ENCODE measurements at regions of chrX and their contacts with region 1.

Region 1: DNA sequence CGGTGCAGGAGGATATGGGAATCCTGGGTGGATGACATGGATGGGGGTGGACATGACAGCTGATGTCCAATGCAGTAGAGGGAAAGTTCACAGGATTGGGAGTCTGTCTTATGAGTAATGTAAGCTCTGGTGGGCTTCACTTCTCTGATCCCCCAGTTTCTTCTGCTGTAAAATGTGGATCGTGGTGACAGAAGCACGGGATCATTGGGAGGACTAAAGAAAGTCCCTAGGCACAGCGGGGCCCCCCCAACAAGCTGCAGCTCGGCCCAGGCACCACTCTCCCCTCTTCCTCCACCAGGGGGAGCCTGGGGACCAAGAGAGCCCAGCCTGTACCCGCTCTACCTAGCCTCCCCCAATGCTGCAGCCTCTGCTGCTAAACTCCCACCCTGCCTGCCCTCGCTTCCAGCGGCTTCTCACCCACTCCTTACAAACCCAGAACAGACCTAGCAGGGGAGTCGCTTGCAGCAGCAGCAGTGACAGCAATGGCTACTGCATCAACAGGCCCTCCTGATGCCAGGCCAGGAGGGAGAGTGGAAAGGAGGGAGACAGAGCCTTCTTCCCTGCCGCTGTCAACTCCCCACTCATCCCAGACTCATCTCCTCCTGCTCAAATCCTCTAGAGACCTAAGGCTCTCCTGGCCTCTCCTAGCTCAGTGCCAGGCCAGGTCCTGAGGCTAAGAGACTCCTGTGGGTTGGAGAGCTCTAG is 36.1 kb upstream of the IQSEC2 start:
- DNase-seq: peak; percentile 76
- ATAC-seq: peak; percentile 87
- H3K4me3 Mint-ChIP-seq: no peak overlapping the region
- H3K27ac Mint-ChIP-seq: no peak overlapping the region
- H3K4me1 Mint-ChIP-seq: peaks cover 12% of the 10 kb centered on the region
- H3K27me3 Mint-ChIP-seq: peaks cover 32% of the 10 kb centered on the region
- CTCF ChIP-seq: peak; percentile 68

Region 2: DNA sequence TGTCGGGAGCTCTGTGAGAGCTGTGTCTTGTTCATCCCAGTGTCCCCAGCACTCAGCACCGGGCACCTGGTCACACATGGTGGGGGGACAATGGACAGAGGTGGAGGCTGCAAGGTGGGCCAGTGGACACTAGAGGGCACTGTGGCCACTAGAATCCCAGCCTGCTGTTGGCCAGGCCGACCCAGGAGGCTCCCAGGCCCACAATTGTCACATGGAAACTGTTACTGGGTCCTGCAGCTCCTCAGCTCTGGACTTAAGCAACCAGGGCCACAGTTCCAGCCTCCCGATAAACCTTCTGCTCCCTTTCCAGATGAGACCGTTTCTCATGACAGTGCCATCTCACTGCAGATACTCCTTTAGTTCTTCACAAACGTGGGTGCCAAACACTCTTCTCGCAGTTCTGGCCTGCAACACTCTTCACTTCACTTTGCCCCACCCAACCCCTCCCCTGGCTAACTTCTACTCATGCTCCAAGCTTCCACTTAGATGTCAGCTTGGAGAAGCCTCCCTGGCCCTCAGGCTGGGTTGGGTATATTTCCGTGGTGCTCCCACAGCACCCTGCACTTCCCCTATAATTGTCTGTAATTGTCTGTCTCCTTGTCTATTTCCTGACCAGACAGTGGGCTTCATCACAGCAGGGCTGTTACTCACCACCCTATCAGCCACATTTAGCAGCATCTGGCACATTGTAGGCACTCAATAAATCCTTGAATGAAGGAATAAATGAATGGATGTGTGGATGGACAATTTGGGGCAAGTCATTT is 32.7 kb before region 1 on chrX:
- CTCF ChIA-PET with region 1: interaction called, 49 read pairs
- POLR2A ChIA-PET with region 1: no interaction called
- intact Hi-C with region 1: no loop called
- DNase-seq: peak; percentile 61
- ATAC-seq: peak; percentile 74
- H3K4me3 Mint-ChIP-seq: no peak overlapping the region
- H3K27ac Mint-ChIP-seq: no peak overlapping the region
- H3K4me1 Mint-ChIP-seq: peaks cover 23% of the 10 kb centered on the region
- H3K27me3 Mint-ChIP-seq: no peaks in the 10 kb centered on the region
- CTCF ChIP-seq: peak; percentile 54

Region 3: GRCh38 chrX:53300157-53300556 is 17.4 kb before region 1 on chrX:
- CTCF ChIA-PET with region 1: interaction called, 11 read pairs
- POLR2A ChIA-PET with region 1: no interaction called
- intact Hi-C with region 1: no loop called
- DNase-seq: no peak
- ATAC-seq: no peak
- H3K4me3 Mint-ChIP-seq: no peak overlapping the region
- H3K27ac Mint-ChIP-seq: no peak overlapping the region
- H3K4me1 Mint-ChIP-seq: no peaks in the 10 kb centered on the region
- H3K27me3 Mint-ChIP-seq: no peaks in the 10 kb centered on the region
- CTCF ChIP-seq: no peak

Region 4: GRCh38 chrX:53305219-53305995 is 12.1 kb before region 1 on chrX:
- CTCF ChIA-PET with region 1: interaction called, 11 read pairs
- POLR2A ChIA-PET with region 1: no interaction called
- intact Hi-C with region 1: no loop called
- DNase-seq: no peak
- ATAC-seq: no peak
- H3K4me3 Mint-ChIP-seq: no peak overlapping the region
- H3K27ac Mint-ChIP-seq: no peak overlapping the region
- H3K4me1 Mint-ChIP-seq: peaks cover 2% of the 10 kb centered on the region
- H3K27me3 Mint-ChIP-seq: no peaks in the 10 kb centered on the region
- CTCF ChIP-seq: no peak

Region 5: DNA sequence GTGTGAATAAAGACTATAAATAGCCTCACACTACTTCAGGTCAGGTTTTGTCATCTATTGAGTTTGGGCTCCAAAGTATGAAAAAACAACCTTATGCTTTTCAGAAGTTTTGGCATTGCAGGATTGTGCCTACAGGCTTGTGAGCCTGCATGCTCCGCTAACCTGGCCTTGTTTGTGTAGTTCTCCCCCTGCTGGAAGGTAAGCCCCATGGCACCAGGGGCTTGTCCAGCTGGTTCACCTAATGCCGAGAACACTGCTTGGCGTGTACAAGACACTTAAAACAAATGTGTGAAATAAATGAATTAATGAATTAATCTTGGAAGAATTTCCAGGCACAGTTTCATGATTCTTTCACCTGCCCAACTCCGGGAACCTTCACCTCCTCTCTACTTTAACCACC is 118.5 kb after region 1 on chrX:
- CTCF ChIA-PET with region 1: interaction called, 21 read pairs
- POLR2A ChIA-PET with region 1: no interaction called
- intact Hi-C with region 1: no loop called
- DNase-seq: peak; percentile 71
- ATAC-seq: peak; percentile 73
- H3K4me3 Mint-ChIP-seq: no peak overlapping the region
- H3K27ac Mint-ChIP-seq: no peak overlapping the region
- H3K4me1 Mint-ChIP-seq: peaks cover 38% of the 10 kb centered on the region
- H3K27me3 Mint-ChIP-seq: peaks cover 3% of the 10 kb centered on the region
- CTCF ChIP-seq: peak; percentile 62

Region 6: GRCh38 chrX:53441531-53442321 is 124.2 kb after region 1 on chrX:
- CTCF ChIA-PET with region 1: interaction called, 57 read pairs
- POLR2A ChIA-PET with region 1: interaction called, 4 read pairs
- intact Hi-C with region 1: loop called (anchors 2 kb)
- DNase-seq: peak; percentile 73
- ATAC-seq: peak; percentile 79
- H3K4me3 Mint-ChIP-seq: peak overlapping the region; percentile 77
- H3K27ac Mint-ChIP-seq: peak overlapping the region; percentile 30
- H3K4me1 Mint-ChIP-seq: peaks cover 22% of the 10 kb centered on the region
- H3K27me3 Mint-ChIP-seq: peaks cover 3% of the 10 kb centered on the region
- CTCF ChIP-seq: no peak

Region 7: DNA sequence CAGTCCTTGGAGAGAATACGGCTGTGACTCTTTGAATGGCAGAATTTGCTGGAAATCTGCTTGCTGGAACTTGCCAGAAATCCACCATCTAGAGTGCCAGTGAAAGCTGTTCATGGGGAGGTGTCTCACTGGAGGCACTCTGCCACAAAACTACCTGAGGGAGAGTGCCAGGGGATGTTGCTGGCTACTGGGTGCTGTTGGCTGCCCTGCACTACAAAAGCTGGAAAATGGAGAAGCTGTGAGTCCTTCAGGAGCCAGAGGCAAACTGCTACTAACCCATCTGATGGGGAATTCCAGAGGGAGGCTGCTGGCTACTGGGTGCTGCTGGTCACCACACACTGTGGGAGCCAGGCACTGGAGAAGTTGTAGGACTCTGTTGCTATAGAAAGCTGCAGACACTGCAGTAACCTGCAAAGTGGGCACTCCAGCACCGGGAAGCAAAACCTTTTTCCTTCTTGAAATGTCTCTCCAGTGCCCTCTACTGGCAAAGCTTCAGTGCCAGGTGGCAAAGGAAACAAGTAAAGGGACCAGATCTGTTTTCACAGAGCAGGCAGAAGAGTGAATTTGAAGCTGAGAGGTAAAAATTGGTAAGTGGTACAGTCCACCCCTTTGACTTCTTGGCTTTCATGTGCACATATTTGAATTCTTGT is 164.4 kb after region 1 on chrX:
- CTCF ChIA-PET with region 1: interaction called, 51 read pairs
- POLR2A ChIA-PET with region 1: no interaction called
- intact Hi-C with region 1: loop called (anchors 5 kb)
- DNase-seq: peak; percentile 62
- ATAC-seq: peak; percentile 51
- H3K4me3 Mint-ChIP-seq: no peak overlapping the region
- H3K27ac Mint-ChIP-seq: no peak overlapping the region
- H3K4me1 Mint-ChIP-seq: no peaks in the 10 kb centered on the region
- H3K27me3 Mint-ChIP-seq: peaks cover 2% of the 10 kb centered on the region
- CTCF ChIP-seq: peak; percentile 60

Measured in activated CD8-positive, alpha-beta T cell treated with anti-CD3 and anti-CD28 coated beads for 36 hours (primary cell).